ENCODE measurements at regions of chr5 and their contacts with region 1.

Region 1: GRCh38 chr5:56814963-56815658 is at the start of gene MAP3K1:
- DNase-seq: peak; percentile 75
- H3K4me3 Mint-ChIP-seq: peak within 1 kb of the TSS; percentile 87
- H3K27ac Mint-ChIP-seq: peak within 1 kb of the TSS; percentile 88
- H3K4me1 Mint-ChIP-seq: peaks cover 43% of the 10 kb centered on the region
- H3K27me3 Mint-ChIP-seq: peaks cover 6% of the 10 kb centered on the region
- total RNA-seq, gene MAP3K1: 19.9 and 20.7 TPM in 2 replicates

Region 2: GRCh38 chr5:55994574-55995333 is 820.4 kb before region 1 on chr5 and contains the start of gene IL6ST:
- intact Hi-C with region 1: loop called (anchors 5 kb)
- DNase-seq: peak; percentile 93
- H3K4me3 Mint-ChIP-seq: peak within 1 kb of the TSS; percentile 95
- H3K27ac Mint-ChIP-seq: peak within 1 kb of the TSS; percentile 94
- H3K4me1 Mint-ChIP-seq: peaks cover 53% of the 10 kb centered on the region
- H3K27me3 Mint-ChIP-seq: no peaks in the 10 kb centered on the region
- total RNA-seq, gene IL6ST: 56.2 and 67.2 TPM in 2 replicates

Region 3: GRCh38 chr5:56481428-56482357 is 333.4 kb before region 1 on chr5:
- intact Hi-C with region 1: loop called (anchors 1 kb)
- DNase-seq: no peak
- H3K4me3 Mint-ChIP-seq: peak overlapping the region; percentile 78
- H3K27ac Mint-ChIP-seq: peak overlapping the region; percentile 82
- H3K4me1 Mint-ChIP-seq: peaks cover 44% of the 10 kb centered on the region
- H3K27me3 Mint-ChIP-seq: no peaks in the 10 kb centered on the region

Region 4: GRCh38 chr5:56670118-56670483 is 145.0 kb before region 1 on chr5:
- intact Hi-C with region 1: loop called (anchors 5 kb)
- DNase-seq: peak; percentile 44
- H3K4me3 Mint-ChIP-seq: no peak overlapping the region
- H3K27ac Mint-ChIP-seq: peak overlapping the region; percentile 46
- H3K4me1 Mint-ChIP-seq: peaks cover 37% of the 10 kb centered on the region
- H3K27me3 Mint-ChIP-seq: peaks cover 4% of the 10 kb centered on the region

Region 5: GRCh38 chr5:56700711-56701110 is 114.4 kb before region 1 on chr5:
- intact Hi-C with region 1: no loop called
- DNase-seq: no peak
- H3K4me3 Mint-ChIP-seq: no peak overlapping the region
- H3K27ac Mint-ChIP-seq: no peak overlapping the region
- H3K4me1 Mint-ChIP-seq: peaks cover 39% of the 10 kb centered on the region
- H3K27me3 Mint-ChIP-seq: peaks cover 16% of the 10 kb centered on the region

Region 6: DNA sequence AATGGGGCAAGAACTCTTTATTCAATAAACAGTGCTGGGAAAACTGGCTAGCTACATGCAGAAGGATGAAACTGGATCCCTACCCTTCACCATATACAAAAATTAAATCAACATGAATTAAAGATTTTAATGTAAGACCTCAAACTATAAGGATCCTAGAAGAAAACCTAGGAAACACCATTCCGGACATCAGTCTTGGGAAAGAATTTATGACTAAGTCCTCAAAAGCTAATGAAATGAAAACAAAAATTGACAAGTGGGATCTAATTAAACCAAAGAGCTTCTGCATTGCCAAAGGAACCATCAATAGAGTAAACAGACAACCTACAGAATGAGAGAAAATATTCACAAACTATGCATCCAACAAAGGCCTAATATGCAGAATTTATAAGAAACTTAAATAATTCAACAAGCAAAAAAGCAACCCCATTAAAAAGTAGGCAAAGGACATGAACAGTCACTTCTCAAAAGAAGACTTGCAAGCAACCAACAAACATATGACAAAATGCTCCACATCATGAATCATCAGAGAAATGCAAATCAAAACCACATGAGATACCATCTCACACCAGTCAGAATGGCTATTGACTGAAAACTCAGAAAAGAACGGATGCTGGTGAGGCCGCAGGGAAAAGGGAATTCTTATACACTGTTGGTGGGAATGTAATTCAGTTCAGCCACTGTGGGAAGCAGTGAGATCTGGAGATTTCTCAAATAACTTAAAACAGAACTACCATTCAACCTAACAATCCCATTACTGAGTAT is 104.1 kb before region 1 on chr5:
- intact Hi-C with region 1: loop called (anchors 5 kb)
- DNase-seq: no peak
- H3K4me3 Mint-ChIP-seq: no peak overlapping the region
- H3K27ac Mint-ChIP-seq: no peak overlapping the region
- H3K4me1 Mint-ChIP-seq: peaks cover 21% of the 10 kb centered on the region
- H3K27me3 Mint-ChIP-seq: peaks cover 27% of the 10 kb centered on the region

Region 7: DNA sequence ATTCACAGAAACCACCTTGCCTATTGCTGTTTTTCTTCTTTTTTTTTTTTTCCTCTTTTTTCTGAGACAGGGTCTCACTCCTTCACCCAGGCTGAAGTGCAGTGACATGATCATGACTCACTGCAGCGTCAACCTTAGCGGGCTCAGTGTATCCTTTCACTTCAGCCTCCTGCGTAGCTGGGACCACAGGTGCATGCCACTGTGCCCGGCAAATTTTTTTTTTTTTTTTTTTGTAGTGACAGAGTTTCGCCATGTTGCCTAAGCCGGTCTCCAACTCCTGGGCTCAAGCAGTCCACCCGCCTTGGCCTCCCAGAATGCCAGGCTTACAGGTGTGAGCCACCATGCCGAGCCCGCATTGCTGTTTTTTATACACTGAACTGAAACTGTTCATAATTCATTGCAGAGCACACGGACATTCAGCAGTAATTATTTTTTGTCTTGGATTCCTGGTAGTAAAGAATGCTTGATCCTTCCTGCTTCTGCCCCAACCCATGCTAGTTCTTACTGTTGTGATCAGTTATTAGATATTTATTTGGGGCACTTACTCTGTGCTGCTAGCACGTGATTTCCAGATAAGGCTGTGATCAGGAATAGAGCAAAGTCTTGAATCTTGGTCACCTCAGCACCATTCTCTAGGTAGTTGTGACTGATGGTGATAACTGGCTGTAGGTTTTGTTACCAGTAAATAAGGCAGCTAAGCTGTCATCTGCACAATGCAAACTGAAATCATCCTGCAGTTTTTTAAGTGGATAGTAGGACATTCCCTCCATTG is 14.2 kb after region 1 on chr5:
- intact Hi-C with region 1: loop called (anchors 2 kb)
- DNase-seq: peak; percentile 31
- H3K4me3 Mint-ChIP-seq: peak overlapping the region; percentile 75
- H3K27ac Mint-ChIP-seq: peak overlapping the region; percentile 67
- H3K4me1 Mint-ChIP-seq: peaks cover 77% of the 10 kb centered on the region
- H3K27me3 Mint-ChIP-seq: no peaks in the 10 kb centered on the region

Region 8: GRCh38 chr5:57173185-57174127 is 358.3 kb after region 1 on chr5 and contains the start of gene GPBP1:
- intact Hi-C with region 1: loop called (anchors 2 kb)
- DNase-seq: peak; percentile 96
- H3K4me3 Mint-ChIP-seq: peak within 1 kb of the TSS; percentile 96
- H3K27ac Mint-ChIP-seq: peak within 1 kb of the TSS; percentile 99
- H3K4me1 Mint-ChIP-seq: peaks cover 33% of the 10 kb centered on the region
- H3K27me3 Mint-ChIP-seq: no peaks in the 10 kb centered on the region
- total RNA-seq, gene GPBP1: 87.4 and 92.0 TPM in 2 replicates

Region 9: GRCh38 chr5:57259704-57260103 is 444.6 kb after region 1 on chr5:
- intact Hi-C with region 1: no loop called
- DNase-seq: no peak
- H3K4me3 Mint-ChIP-seq: no peak overlapping the region
- H3K27ac Mint-ChIP-seq: peak overlapping the region; percentile 76
- H3K4me1 Mint-ChIP-seq: peaks cover 34% of the 10 kb centered on the region
- H3K27me3 Mint-ChIP-seq: no peaks in the 10 kb centered on the region